H1 (cell line): ENCODE measurements at regions of chrX and their contacts with region 1.

Region 1: GRCh38 chrX:107324499-107325320 is 118.3 kb downstream of the DNAAF6 start:
- DNase-seq: peak; percentile 68 to 84
- H3K4me3 ChIP-seq: peak overlapping the region in 1 of 4 experiments; percentile 50; a peak in 4 of 8 replicates
- H3K27ac ChIP-seq: no peak overlapping the region
- H3K4me1 ChIP-seq: peaks cover 0 to 8% (median 3%) of the 10 kb centered on the region in 4 experiments; a peak in 4 of 7 replicates
- H3K27me3 ChIP-seq: no peaks in the 10 kb centered on the region
- CTCF ChIP-seq: peak; percentile 4 to 37 (median 24); a peak in 2 of 4 replicates
- EP300 ChIP-seq: no peak
- POLR2A ChIP-seq: no peak
- RAD21 ChIP-seq: peak; percentile 52 to 53

Region 2: DNA sequence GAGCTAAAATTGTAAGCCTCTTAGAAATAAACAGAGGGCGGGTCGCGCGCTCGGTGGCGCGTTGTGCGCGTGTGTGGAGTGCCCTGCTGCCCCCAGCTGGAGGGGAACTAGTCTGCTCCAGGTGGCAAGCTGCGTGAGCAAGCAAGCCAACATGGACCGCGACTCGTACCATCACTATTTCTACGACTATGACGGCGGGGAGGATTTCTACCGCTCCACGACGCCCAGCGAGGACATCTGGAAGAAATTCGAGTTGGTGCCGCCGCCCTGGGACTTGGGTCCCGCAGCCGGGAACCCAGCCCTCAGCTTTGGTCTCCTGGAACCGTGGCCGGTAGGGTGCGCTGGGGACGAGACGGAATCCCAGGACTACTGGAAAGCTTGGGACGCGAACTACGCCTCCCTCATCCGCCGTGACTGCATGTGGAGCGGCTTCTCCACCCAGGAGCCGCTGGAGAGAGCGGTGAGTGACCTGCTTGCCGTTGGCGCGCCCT is 52.2 kb before region 1 on chrX:
- CTCF ChIA-PET with region 1: interaction called, 13 read pairs
- POLR2A ChIA-PET with region 1: no interaction called
- DNase-seq: peak in 1 of 2 experiments; percentile 67
- H3K4me3 ChIP-seq: peak overlapping the region; percentile 32 to 62 (median 44); a peak in 7 of 8 replicates
- H3K27ac ChIP-seq: no peak overlapping the region
- H3K4me1 ChIP-seq: no peaks in the 10 kb centered on the region
- H3K27me3 ChIP-seq: peaks cover 0 to 11% (median 5%) of the 10 kb centered on the region in 4 experiments; a peak in 5 of 7 replicates
- CTCF ChIP-seq: peak in 2 of 3 experiments; percentile 30 to 49; a peak in 3 of 4 replicates
- EP300 ChIP-seq: no peak
- POLR2A ChIP-seq: no peak
- RAD21 ChIP-seq: peak; percentile 29 to 34